BJ (cell line): ENCODE measurements at regions of chr11 and their contacts with region 1.

Region 1: GRCh38 chr11:65477149-65477965 is 21.5 kb upstream of the MALAT1 start:
- DNase-seq: no peak
- H3K4me3 ChIP-seq: peak overlapping the region; percentile 79
- H3K27me3 ChIP-seq: no peaks in the 10 kb centered on the region
- CTCF ChIP-seq: no peak

Region 2: GRCh38 chr11:65366340-65366773 is 111.0 kb before region 1 on chr11:
- CTCF ChIA-PET with region 1: interaction called, 3 read pairs
- POLR2A ChIA-PET with region 1: interaction called, 11 read pairs
- DNase-seq: no peak
- H3K4me3 ChIP-seq: no peak overlapping the region
- H3K27me3 ChIP-seq: no peaks in the 10 kb centered on the region
- CTCF ChIP-seq: peak; percentile 74

Region 3: DNA sequence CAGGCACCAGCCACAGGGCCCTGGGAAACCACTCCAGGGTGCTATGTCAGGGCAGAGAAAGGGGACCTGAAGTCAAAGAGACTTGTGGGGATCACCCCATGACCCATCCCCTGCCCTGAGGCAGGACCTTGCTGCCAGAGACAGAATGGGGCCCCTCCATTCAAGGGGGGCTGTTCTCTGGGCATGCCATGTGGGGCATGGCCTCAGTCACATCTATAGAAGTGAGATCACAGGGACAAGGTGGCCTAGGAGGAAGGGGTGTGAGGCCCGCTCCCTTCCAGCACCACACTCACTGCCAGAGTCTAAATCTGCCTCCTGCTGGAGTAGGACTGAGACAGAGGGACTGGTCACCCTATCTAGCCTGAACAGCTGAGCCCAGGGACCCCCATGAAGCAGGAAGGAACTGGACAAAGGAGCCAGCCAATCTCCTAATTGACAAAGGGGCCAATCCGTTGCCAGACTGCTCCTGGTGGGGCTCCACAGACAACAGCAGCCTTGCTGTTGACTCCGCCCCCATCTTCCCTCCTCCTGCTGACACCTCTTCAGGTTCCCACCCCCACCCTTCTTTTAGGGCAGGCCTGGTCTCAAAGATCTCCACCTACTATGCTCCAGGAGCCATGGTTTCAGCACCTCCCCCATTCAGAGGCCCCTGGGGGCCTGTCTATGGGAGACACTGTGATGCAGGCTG is 28.8 kb before region 1 on chr11:
- CTCF ChIA-PET with region 1: interaction called, 6 read pairs
- POLR2A ChIA-PET with region 1: interaction called, 17 read pairs
- DNase-seq: no peak
- H3K4me3 ChIP-seq: no peak overlapping the region
- H3K27me3 ChIP-seq: no peaks in the 10 kb centered on the region
- CTCF ChIP-seq: no peak

Region 4: DNA sequence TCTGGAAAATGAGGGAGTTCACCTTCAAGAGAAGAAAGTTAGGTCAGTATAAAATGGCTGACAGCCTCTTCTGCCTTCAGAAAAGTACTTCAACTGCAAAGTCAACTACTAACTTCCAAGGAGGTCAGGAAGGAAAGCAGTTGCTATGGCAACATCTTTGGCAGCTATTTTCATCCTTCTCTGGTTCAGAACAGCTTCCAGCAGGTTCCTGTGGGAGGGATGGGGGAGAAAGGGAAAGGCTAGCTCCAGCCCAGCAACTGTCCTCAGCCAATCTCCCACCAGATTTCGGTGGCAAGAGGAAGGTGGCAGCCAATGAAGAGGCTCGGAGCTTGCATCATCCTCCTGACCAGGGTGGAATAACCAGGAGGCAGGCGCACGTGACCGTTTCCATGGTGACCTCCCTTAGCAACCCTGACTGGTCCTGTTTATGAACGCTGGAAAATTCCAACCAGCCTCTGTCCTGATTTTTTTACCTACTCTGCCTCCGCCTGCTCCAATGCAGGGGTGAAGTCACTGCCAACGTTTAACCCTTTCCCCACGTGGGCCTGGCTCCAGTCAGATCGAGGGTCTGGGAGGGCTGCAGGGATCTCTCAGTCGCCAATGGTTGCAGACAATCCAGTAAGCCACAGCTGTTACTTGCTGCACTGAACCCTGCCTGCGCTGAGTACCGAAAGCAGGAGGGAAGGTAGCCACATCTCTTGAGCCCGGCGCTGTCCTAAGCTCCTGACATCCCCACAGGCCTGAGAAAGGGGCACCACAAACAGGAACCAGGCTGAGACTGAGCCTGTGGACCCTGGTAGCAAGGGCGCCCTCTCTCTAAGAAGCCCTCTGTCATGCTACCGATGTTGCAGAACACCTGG is 10.3 kb after region 1 on chr11:
- CTCF ChIA-PET with region 1: interaction called, 62 read pairs
- POLR2A ChIA-PET with region 1: interaction called, 13 read pairs
- DNase-seq: peak; percentile 100
- H3K4me3 ChIP-seq: 0 out of 2 replicates have a peak overlapping the region, but pooled peaks have one; percentile 10
- H3K27me3 ChIP-seq: no peaks in the 10 kb centered on the region
- CTCF ChIP-seq: no peak